Activated naive CD4-positive, alpha-beta T cell treated with anti-CD3 and anti-CD28 coated beads for 36 hours (primary cell): ENCODE measurements at regions of chr11 and their contacts with region 1.

Region 1: GRCh38 chr11:5684646-5685362 is at the start of gene TRIM5:
- DNase-seq: peak; percentile 92
- H3K4me3 Mint-ChIP-seq: peak within 1 kb of the TSS; percentile 96
- H3K27ac Mint-ChIP-seq: peak within 1 kb of the TSS; percentile 95
- H3K4me1 Mint-ChIP-seq: peaks cover 42% of the 10 kb centered on the region
- H3K27me3 Mint-ChIP-seq: no peaks in the 10 kb centered on the region
- total RNA-seq, gene TRIM5: 37.2 to 38.0 TPM

Region 2: GRCh38 chr11:3841426-3842350 is 1843.1 kb before region 1 on chr11:
- CTCF ChIA-PET with region 1: no interaction called
- intact Hi-C with region 1: loop called (anchors 5 kb)
- DNase-seq: peak; percentile 98
- H3K4me3 Mint-ChIP-seq: peak overlapping the region; percentile 85
- H3K27ac Mint-ChIP-seq: peak overlapping the region; percentile 86
- H3K4me1 Mint-ChIP-seq: peaks cover 50% of the 10 kb centered on the region
- H3K27me3 Mint-ChIP-seq: no peaks in the 10 kb centered on the region

Region 3: GRCh38 chr11:5624489-5625279 is 60.1 kb before region 1 on chr11 and contains the start of gene TRIM34:
- CTCF ChIA-PET with region 1: interaction called, 7 read pairs
- intact Hi-C with region 1: loop called (anchors 1 kb)
- DNase-seq: peak; percentile 73
- H3K4me3 Mint-ChIP-seq: peak within 1 kb of the TSS; percentile 87
- H3K27ac Mint-ChIP-seq: peak within 1 kb of the TSS; percentile 88
- H3K4me1 Mint-ChIP-seq: peaks cover 31% of the 10 kb centered on the region
- H3K27me3 Mint-ChIP-seq: no peaks in the 10 kb centered on the region
- total RNA-seq, gene TRIM34: 12.8 to 12.9 TPM

Region 4: DNA sequence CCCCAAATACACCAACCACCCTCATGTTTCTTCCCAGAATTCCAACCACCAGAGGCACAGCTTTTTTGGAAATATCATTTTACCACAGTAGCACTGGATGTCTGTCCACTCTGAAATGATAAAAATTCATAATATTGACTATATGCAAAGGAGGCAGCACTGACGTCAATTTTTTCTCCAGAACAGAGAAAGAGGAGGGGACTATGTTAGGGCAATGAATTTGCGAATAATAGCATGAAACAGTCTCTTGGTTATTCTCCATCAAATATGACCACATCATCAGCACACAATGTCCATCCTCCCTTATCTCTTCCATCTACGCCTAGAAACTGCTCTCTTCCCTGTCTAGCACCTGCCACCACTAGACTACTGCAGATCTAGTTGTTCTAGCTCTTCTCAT is 38.7 kb before region 1 on chr11:
- CTCF ChIA-PET with region 1: no interaction called
- intact Hi-C with region 1: no loop called
- DNase-seq: no peak
- H3K4me3 Mint-ChIP-seq: no peak overlapping the region
- H3K27ac Mint-ChIP-seq: no peak overlapping the region
- H3K4me1 Mint-ChIP-seq: peaks cover 6% of the 10 kb centered on the region
- H3K27me3 Mint-ChIP-seq: no peaks in the 10 kb centered on the region

Region 5: GRCh38 chr11:5808500-5809121 is 123.8 kb after region 1 on chr11 and contains the start of gene OR52N2:
- CTCF ChIA-PET with region 1: interaction called, 6 read pairs
- intact Hi-C with region 1: loop called (anchors 1 kb)
- DNase-seq: peak; percentile 86
- H3K4me3 Mint-ChIP-seq: peak within 1 kb of the TSS; percentile 89
- H3K27ac Mint-ChIP-seq: peak within 1 kb of the TSS; percentile 67
- H3K4me1 Mint-ChIP-seq: peaks cover 8% of the 10 kb centered on the region
- H3K27me3 Mint-ChIP-seq: peaks cover 5% of the 10 kb centered on the region
- total RNA-seq, gene OR52N2: not detected

Region 6: GRCh38 chr11:6419009-6419631 is 734.3 kb after region 1 on chr11 and contains the start of gene APBB1:
- CTCF ChIA-PET with region 1: no interaction called
- intact Hi-C with region 1: loop called (anchors 5 kb)
- DNase-seq: peak; percentile 75
- H3K4me3 Mint-ChIP-seq: peak within 1 kb of the TSS; percentile 76
- H3K27ac Mint-ChIP-seq: peak within 1 kb of the TSS; percentile 77
- H3K4me1 Mint-ChIP-seq: peaks cover 3% of the 10 kb centered on the region
- H3K27me3 Mint-ChIP-seq: no peaks in the 10 kb centered on the region
- total RNA-seq, gene APBB1: 44.5 to 45.1 TPM

Region 7: DNA sequence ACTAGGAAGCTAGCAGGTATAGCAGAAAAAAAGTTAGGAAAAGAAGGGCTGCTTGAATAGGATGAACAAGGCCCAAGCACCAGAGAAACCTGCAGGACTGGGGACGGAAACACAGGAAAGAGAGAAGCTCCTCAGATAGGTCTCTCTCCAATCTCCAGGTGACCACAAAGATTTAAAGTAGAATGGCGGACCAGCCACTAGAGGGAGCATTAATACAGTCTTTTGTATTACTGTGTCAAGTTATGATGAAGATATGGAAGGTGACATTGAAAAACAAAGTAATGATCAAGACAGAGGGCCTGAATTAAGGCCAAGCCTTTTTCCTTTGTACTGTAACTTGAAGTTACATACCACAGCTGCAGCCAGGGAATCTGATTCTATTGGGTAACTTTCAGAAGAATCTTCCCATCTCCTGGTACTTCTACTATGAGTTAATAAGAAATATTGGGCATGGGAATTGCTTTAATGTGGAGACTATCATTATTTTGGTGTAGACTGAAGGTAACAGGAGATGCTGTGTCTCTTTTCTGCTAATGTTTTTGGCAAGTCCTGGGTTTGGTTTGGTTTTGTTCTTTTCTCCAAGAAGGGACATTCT is 1053.2 kb after region 1 on chr11:
- CTCF ChIA-PET with region 1: interaction called, 4 read pairs
- intact Hi-C with region 1: loop called (anchors 5 kb)
- DNase-seq: peak; percentile 87
- H3K4me3 Mint-ChIP-seq: no peak overlapping the region
- H3K27ac Mint-ChIP-seq: peak overlapping the region; percentile 86
- H3K4me1 Mint-ChIP-seq: peaks cover 92% of the 10 kb centered on the region
- H3K27me3 Mint-ChIP-seq: no peaks in the 10 kb centered on the region